Left lung (tissue), 14 donors: ENCODE measurements at regions of chr2 and their contacts with region 1.

Region 1: GRCh38 chr2:46364797-46365457 is 67.7 kb downstream of the EPAS1 start:
- DNase-seq: peak in 2 of 4 donors; percentile 30 to 35
- ATAC-seq: peak; percentile 75
- H3K4me3 ChIP-seq: no peak overlapping the region
- H3K27ac ChIP-seq: peak overlapping the region in 1 of 2 donors; percentile 57
- H3K4me1 ChIP-seq: peaks cover 18 to 74% of the 10 kb centered on the region in 2 donors
- H3K27me3 ChIP-seq: no peaks in the 10 kb centered on the region
- CTCF ChIP-seq: peak; percentile 86 to 87

Region 2: DNA sequence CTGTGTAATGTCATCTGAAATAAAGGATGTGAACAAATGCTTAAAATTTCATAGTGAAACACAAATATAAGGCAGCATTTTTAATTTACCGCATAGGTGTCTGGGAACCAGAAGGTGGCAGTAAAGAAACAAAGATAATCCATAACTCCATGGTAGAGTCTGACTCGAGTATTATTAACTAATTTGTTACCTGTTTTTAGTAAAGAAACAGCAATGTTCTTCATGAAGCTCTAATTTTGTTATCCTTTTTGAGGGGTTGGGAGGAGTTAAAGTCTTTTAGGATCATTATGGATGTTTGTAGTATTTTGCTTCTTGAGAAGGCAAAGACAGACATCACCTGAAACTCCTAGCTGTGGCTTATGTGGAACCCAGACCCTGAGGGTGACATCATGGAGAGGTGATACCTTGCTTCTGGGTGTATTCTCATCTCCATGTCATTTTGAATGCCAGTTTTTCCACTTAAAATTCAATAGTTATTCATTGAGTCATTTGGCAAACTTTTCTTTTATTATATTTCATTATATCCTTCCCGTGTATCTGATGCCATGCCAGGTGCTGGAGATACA is 353.9 kb before region 1 on chr2:
- intact Hi-C with region 1: loop called in 1 of 2 experiments (anchors 10 kb)
- DNase-seq: peak in 1 of 4 donors; percentile 53
- ATAC-seq: peak; percentile 81
- H3K4me3 ChIP-seq: no peak overlapping the region
- H3K27ac ChIP-seq: no peak overlapping the region
- H3K4me1 ChIP-seq: peaks cover 0 to 17% of the 10 kb centered on the region in 2 donors
- H3K27me3 ChIP-seq: no peaks in the 10 kb centered on the region
- CTCF ChIP-seq: peak; percentile 32 to 75

Region 3: DNA sequence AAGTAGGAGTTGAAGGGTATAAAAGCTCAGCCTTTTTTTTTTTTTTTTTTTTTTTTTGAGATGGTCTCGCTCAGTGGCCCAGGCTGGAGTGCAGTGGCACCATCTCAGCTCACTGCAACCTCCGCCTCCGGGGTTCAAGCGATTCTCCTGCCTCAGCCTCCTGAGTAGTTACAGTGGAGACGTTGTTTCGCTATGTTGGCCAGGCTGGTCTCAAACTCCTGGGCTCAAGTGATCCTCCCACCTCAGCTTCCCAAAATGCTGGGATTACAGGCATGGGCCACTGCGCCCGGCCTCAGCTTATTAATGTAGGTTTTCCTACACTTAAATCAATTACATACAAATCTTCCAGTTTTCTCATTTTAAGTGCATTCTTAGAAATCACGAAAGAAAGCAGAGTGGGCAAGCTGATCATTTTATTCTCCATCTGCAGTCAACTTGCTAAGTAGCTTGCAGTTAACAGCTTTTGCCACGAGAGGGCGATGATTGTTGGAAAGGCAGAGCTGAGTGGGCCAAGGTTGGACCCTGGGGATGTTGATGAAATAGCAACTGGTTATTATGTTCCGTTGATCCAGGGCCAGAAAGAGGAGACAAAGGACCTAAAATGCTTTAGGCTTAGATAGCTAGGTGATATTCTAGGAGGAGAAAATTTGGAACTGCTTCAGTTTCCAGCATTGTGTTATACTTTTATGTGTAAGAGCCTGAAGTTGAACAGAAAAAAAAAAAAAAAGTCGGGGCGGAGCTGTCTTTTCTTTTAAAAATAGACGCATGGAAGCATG is 302.1 kb before region 1 on chr2:
- intact Hi-C with region 1: loop called in 1 of 2 experiments (anchors 10 kb)
- DNase-seq: peak in 3 of 4 donors; percentile 67 to 85 (median 76)
- ATAC-seq: peak; percentile 90
- H3K4me3 ChIP-seq: no peak overlapping the region
- H3K27ac ChIP-seq: peak overlapping the region in 1 of 2 donors; percentile 57
- H3K4me1 ChIP-seq: peaks cover 4 to 18% of the 10 kb centered on the region in 2 donors
- H3K27me3 ChIP-seq: no peaks in the 10 kb centered on the region
- CTCF ChIP-seq: peak; percentile 76 to 81

Region 4: GRCh38 chr2:46306330-46306751 is 58.6 kb before region 1 on chr2:
- intact Hi-C with region 1: no loop called
- DNase-seq: peak in 1 of 4 donors; percentile 66
- ATAC-seq: peak; percentile 68
- H3K4me3 ChIP-seq: no peak overlapping the region
- H3K27ac ChIP-seq: peak overlapping the region; percentile 74 to 84
- H3K4me1 ChIP-seq: peaks cover 63 to 85% of the 10 kb centered on the region in 2 donors
- H3K27me3 ChIP-seq: peaks cover 0 to 4% of the 10 kb centered on the region in 2 donors
- CTCF ChIP-seq: no peak